Spleen (tissue), 13 donors: ENCODE measurements at regions of chr1 and their contacts with region 1.

Region 1: DNA sequence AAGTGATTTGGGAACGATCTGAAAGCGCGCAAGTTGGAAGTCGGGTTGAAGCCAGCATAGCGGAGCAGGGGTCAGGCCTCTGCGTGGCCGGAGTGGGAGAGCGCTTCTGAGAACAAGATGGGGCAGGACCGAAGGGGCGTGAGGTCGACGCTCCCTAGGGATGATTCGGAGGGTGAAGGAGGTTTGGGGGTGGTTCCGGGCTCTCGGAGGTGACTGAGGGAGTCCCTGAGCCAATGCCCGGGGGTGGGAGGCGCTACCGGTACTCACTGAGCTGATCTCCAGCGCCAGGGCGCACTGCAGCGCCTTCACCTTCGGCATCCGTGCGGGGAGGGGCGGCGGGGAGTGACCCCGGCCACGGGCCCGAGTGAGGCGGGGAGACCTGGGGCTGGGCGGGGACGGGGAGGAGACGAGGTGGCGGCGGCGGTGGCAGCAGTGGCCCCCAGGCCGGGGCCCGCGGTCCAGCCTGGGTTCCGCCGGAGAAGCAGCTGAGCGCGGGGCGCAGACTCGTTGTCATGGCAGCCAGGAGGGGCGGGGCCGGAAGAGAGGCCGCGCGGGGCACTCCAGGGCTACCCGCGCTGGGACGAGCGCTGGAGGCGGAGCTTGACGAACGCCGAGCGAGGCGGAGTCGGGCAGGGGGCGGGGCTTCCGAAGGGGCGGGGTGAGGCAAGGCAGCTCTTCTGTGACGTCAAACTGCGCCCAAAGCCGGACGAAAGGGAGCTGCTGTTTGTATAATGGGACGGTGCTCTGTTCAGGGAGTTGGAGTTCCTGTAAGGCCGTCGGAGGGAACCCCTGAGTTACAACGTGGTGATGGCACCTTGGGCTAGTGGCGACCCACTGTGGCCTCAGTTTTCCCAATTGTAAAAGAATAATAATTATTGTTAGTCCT is at the start of gene SPATA6:
- DNase-seq: peak; percentile 99
- H3K4me3 ChIP-seq: peak within 1 kb of the TSS; percentile 70 to 96 (median 85)
- H3K27ac ChIP-seq: peak within 1 kb of the TSS; percentile 75 to 89 (median 84)
- H3K4me1 ChIP-seq: peaks cover 9 to 42% (median 28%) of the 10 kb centered on the region in 6 donors
- H3K27me3 ChIP-seq: peaks cover 0 to 6% (median 0%) of the 10 kb centered on the region in 7 donors
- CTCF ChIP-seq: peak in 2 of 11 experiments; percentile 22 to 35
- POLR2A ChIP-seq: peak in 1 of 3 donors; percentile 76
- total RNA-seq, gene SPATA6: 8.3 to 34.9 (median 21.2) TPM

Region 2: DNA sequence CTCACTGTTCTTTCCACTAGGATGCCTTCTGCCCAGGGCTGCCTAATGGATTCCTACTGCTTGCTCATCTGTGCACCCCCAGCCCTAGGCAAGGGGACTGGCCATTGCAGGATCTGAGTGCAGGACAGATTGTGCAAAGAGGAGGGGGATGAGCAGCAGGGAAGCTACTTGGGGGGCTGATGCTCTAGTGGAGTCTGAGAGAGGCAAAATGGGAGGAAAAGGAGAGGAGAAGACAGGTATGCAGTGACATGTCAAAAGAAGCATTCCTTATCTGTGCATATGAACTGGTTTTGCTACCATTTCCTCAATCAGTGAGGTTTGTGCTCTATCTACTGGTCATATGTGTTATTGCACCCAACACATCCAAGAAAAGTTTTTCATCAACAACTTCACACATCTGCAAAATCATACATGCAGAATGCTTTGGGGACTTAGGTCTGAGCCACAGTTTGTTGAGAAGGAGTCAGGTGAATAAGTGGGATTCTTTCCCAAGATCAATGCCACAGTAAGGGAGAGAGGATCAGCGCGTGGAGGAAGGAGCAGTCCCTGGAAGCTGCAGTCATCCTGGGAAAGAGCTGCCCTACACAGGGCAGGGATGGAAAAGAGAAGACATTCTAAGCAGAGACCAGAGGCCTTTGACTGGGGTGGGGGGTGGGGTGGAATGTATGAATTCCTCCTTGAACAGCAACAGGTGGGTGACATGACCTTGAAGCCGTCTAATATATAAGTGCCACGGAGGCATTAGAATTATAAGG is 235.0 kb before region 1 on chr1:
- intact Hi-C with region 1: loop called (anchors 10 kb)
- DNase-seq: no peak
- H3K4me3 ChIP-seq: no peak overlapping the region
- H3K27ac ChIP-seq: no peak overlapping the region
- H3K4me1 ChIP-seq: peaks cover 0 to 32% (median 13%) of the 10 kb centered on the region in 6 donors
- H3K27me3 ChIP-seq: no peaks in the 10 kb centered on the region
- CTCF ChIP-seq: peak; percentile 55 to 91 (median 72)
- POLR2A ChIP-seq: no peak

Region 3: DNA sequence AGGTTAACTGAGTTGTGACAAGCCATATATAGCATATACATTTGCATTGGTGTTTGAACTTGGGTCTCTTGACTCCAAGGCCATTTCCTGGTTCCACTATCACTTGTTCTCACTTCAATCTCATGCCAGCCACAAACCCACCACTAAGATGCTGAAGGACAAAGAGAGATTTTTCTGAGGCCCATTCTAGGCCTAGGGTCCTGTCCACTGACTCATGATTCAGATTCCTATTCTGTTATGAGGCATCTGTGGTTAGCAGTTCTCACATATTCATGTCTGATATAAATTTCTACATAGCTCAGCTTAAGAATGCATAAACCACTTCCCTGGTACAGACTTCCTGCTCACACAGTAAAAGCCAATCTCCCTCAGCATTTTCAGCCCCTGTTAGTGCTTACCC is 630.8 kb after region 1 on chr1:
- intact Hi-C with region 1: no loop called
- DNase-seq: no peak
- H3K4me3 ChIP-seq: no peak overlapping the region
- H3K27ac ChIP-seq: no peak overlapping the region
- H3K4me1 ChIP-seq: no peaks in the 10 kb centered on the region
- H3K27me3 ChIP-seq: no peaks in the 10 kb centered on the region
- CTCF ChIP-seq: no peak
- POLR2A ChIP-seq: no peak